H1 (cell line): ENCODE measurements at regions of chr11 and their contacts with region 1.

Region 1: GRCh38 chr11:118171269-118172062 is 5.0 kb downstream of the SCN2B start:
- DNase-seq: peak in 1 of 2 experiments; percentile 92
- H3K4me3 ChIP-seq: peak overlapping the region; percentile 10 to 68 (median 41); a peak in 7 of 8 replicates
- H3K27ac ChIP-seq: no peak overlapping the region
- H3K4me1 ChIP-seq: peaks cover 0 to 27% (median 15%) of the 10 kb centered on the region in 4 experiments
- H3K27me3 ChIP-seq: peaks cover 6 to 87% (median 66%) of the 10 kb centered on the region in 4 experiments
- CTCF ChIP-seq: peak; percentile 90 to 94 (median 90)
- EP300 ChIP-seq: 0 out of 3 replicates have a peak, but pooled peaks of 1 of the 2 experiments have one; percentile 19
- POLR2A ChIP-seq: no peak
- RAD21 ChIP-seq: peak; percentile 94 to 96

Region 2: DNA sequence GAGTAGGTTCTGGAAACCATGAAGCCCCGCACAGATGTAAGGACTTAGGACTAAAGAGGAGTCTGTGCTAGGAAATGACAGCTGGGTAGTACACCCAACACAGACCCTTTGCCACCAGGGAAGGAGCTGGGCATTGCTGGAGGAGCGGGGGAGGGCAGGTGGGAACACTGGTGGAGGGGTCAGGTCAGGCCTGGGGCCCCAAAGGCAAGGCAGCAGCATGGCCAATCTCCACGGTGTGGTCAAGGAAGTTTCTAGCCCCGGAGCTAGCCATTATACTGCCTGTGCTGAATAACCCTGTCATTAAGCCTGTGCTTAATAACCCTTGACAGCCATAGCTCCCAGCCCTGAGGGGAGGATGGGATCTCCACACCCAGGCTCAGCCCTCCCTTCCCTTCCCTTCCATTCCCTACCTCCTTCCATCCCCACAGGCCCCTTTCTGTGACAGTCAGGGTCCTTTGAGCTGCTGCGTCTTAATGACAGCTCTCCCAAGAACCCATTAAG is 92.5 kb before region 1 on chr11:
- CTCF ChIA-PET with region 1: interaction called, 13 read pairs
- POLR2A ChIA-PET with region 1: no interaction called
- DNase-seq: no peak
- H3K4me3 ChIP-seq: no peak overlapping the region
- H3K27ac ChIP-seq: no peak overlapping the region
- H3K4me1 ChIP-seq: peaks cover 4 to 12% (median 7%) of the 10 kb centered on the region in 4 experiments; a peak in 6 of 7 replicates
- H3K27me3 ChIP-seq: no peaks in the 10 kb centered on the region; a peak in 1 of 7 replicates
- CTCF ChIP-seq: no peak
- EP300 ChIP-seq: no peak
- POLR2A ChIP-seq: no peak
- RAD21 ChIP-seq: no peak

Region 3: GRCh38 chr11:118139578-118139977 is 31.9 kb before region 1 on chr11:
- CTCF ChIA-PET with region 1: interaction called, 245 read pairs
- POLR2A ChIA-PET with region 1: interaction called, 4 read pairs
- DNase-seq: no peak
- H3K4me3 ChIP-seq: no peak overlapping the region
- H3K27ac ChIP-seq: no peak overlapping the region
- H3K4me1 ChIP-seq: 0 out of 7 replicates have a peak, but pooled peaks cover 0 to 2% (median 0%) of the 10 kb centered on the region in 4 experiments
- H3K27me3 ChIP-seq: peaks cover 0 to 10% (median 1%) of the 10 kb centered on the region in 4 experiments; a peak in 3 of 7 replicates
- CTCF ChIP-seq: no peak
- EP300 ChIP-seq: no peak
- POLR2A ChIP-seq: no peak
- RAD21 ChIP-seq: no peak

Region 4: GRCh38 chr11:118152552-118153471 is 18.7 kb before region 1 on chr11 and contains the start of gene SCN4B:
- CTCF ChIA-PET with region 1: interaction called, 245 read pairs
- POLR2A ChIA-PET with region 1: interaction called, 16 read pairs
- DNase-seq: peak in 1 of 2 experiments; percentile 83
- H3K4me3 ChIP-seq: peak within 1 kb of the TSS; percentile 68 to 96 (median 77)
- H3K27ac ChIP-seq: no peak within 1 kb of the TSS
- H3K4me1 ChIP-seq: peaks cover 4 to 69% (median 46%) of the 10 kb centered on the region in 4 experiments
- H3K27me3 ChIP-seq: peaks cover 34 to 77% (median 73%) of the 10 kb centered on the region in 4 experiments
- CTCF ChIP-seq: no peak
- EP300 ChIP-seq: no peak
- POLR2A ChIP-seq: no peak
- RAD21 ChIP-seq: peak in 1 of 2 experiments; percentile 15; a peak in 1 of 4 replicates
- total RNA-seq, gene SCN4B: 2.0 and 2.8 TPM in 2 replicates

Region 5: GRCh38 chr11:118283756-118284350 is 112.4 kb after region 1 on chr11:
- CTCF ChIA-PET with region 1: interaction called, 14 read pairs
- POLR2A ChIA-PET with region 1: no interaction called
- DNase-seq: no peak
- H3K4me3 ChIP-seq: no peak overlapping the region
- H3K27ac ChIP-seq: no peak overlapping the region
- H3K4me1 ChIP-seq: no peaks in the 10 kb centered on the region
- H3K27me3 ChIP-seq: no peaks in the 10 kb centered on the region
- CTCF ChIP-seq: no peak
- EP300 ChIP-seq: no peak
- POLR2A ChIP-seq: no peak
- RAD21 ChIP-seq: no peak